A549 (cell line): ENCODE measurements at regions of chr3 and their contacts with region 1.

Region 1: DNA sequence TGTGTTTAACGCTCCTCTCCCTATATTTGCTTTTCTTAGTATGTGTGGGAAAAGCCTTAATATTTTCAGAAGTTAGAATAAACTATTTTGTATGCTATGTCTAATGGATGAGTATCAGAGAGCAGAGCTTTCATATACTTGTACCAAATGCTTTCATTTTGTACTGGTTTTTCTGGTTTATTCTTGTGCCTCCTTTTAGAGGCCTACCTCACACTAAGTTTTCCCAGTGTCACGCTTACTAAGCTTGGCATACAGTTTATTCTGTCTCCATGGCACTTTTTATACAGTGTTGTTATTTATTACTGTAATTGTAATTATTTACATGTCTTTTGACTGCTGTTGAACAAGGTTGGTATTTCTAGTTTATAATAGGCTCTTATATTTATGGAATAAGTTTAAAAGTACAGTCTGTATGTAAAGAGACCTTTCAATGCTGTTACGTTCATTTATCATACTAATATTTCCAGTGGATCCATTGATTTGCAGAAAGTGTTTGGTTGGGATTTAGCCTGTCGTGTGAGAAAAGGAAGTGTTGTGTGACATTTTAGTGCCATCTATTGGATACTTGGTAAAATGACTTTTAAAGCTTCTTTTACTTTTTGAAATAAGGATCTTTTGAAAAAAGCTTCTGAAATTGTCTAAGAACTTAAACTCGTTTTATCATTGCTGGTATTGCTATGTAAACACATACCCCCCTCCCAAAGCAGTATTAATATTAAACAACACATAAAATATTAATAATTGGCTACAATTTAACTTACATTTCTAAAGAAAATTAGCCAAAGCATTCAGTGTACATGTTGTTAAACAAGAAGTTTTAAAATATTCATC is 5.2 kb upstream of the EBLN2 start:
- DNase-seq: peak; percentile 12 to 64
- ATAC-seq: peak; percentile 56 to 79; a peak in 4 of 6 replicates
- H3K4me3 ChIP-seq: no peak overlapping the region
- H3K27ac ChIP-seq: peak overlapping the region in 1 of 2 experiments; percentile 51; a peak in 3 of 6 replicates
- H3K4me1 ChIP-seq: peaks cover 30% of the 10 kb centered on the region; the same call in 2 of the 3 replicates
- CTCF ChIP-seq: peak; percentile 70
- EP300 ChIP-seq: no peak
- POLR2A ChIP-seq: no peak
- RAD21 ChIP-seq: peak; percentile 66 to 74

Region 2: GRCh38 chr3:72887705-72888545 is 168.3 kb before region 1 on chr3 and contains the start of gene GXYLT2:
- CTCF ChIA-PET with region 1: interaction called, 10 read pairs
- POLR2A ChIA-PET with region 1: no interaction called
- DNase-seq: peak; percentile 58 to 75
- ATAC-seq: peak; percentile 94 to 95
- H3K4me3 ChIP-seq: peak within 1 kb of the TSS; percentile 71
- H3K27ac ChIP-seq: peak within 1 kb of the TSS; percentile 76 to 96
- H3K4me1 ChIP-seq: peaks cover 29% of the 10 kb centered on the region
- CTCF ChIP-seq: peak; percentile 51
- EP300 ChIP-seq: no peak
- POLR2A ChIP-seq: peak; percentile 46
- RAD21 ChIP-seq: no peak
- polyA plus RNA-seq, gene GXYLT2: 3.2 and 3.3 TPM in 2 replicates

Region 3: DNA sequence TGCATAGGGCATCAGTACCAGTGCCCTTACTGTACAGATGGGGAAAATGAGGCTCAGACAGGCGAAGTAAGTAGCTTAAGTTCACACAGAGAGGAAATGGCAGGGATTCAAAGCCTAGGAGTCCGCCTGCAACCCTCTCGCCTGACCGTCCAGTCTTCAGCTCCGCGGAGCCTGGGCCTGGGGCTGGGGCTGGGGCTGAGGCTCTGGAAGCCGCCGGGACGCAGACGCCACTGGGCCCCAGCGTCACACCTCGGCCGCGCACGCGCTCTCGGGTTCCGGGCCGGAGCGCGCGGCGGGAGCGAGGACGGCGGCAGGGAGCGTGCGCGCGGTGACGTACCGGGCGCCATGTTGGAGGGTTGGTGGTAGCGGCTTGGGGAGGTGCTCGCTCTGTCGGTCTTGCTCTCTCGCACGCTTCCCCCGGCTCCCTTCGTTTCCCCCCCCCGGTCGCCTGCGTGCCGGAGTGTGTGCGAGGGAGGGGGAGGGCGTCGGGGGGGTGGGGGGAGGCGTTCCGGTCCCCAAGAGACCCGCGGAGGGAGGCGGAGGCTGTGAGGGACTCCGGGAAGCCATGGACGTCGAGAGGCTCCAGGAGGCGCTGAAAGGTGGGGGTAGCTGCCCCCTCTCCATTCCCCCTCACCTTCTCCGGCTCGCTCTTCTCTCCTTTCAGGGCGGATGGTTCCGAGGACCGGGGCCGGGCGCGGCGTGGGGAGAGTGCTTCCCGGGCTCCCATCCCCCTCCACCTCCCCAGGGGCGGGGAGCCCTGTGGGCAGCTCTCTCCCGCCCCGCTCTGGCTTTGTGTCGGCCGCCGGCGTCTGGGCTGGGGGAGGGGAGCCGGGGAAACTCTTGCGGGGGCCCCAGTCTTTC is 59.5 kb before region 1 on chr3 and contains the start of gene PPP4R2:
- CTCF ChIA-PET with region 1: interaction called, 7 read pairs
- POLR2A ChIA-PET with region 1: interaction called, 14 read pairs
- DNase-seq: peak; percentile 72 to 93
- ATAC-seq: peak; percentile 94 to 96
- H3K4me3 ChIP-seq: peak within 1 kb of the TSS; percentile 76
- H3K27ac ChIP-seq: peak within 1 kb of the TSS; percentile 94 to 97
- H3K4me1 ChIP-seq: peaks cover 30% of the 10 kb centered on the region
- CTCF ChIP-seq: no peak
- EP300 ChIP-seq: no peak
- POLR2A ChIP-seq: peak; percentile 91
- RAD21 ChIP-seq: no peak
- polyA plus RNA-seq, gene PPP4R2: 42.9 and 68.4 TPM in 2 replicates

Region 4: GRCh38 chr3:73045391-73045790 is 10.8 kb before region 1 on chr3:
- CTCF ChIA-PET with region 1: interaction called, 16 read pairs
- POLR2A ChIA-PET with region 1: no interaction called
- DNase-seq: no peak
- ATAC-seq: no peak
- H3K4me3 ChIP-seq: no peak overlapping the region
- H3K27ac ChIP-seq: no peak overlapping the region
- H3K4me1 ChIP-seq: 0 out of 3 replicates have a peak, but pooled peaks cover 6% of the 10 kb centered on the region
- CTCF ChIP-seq: no peak
- EP300 ChIP-seq: no peak
- POLR2A ChIP-seq: no peak
- RAD21 ChIP-seq: no peak

Region 5: DNA sequence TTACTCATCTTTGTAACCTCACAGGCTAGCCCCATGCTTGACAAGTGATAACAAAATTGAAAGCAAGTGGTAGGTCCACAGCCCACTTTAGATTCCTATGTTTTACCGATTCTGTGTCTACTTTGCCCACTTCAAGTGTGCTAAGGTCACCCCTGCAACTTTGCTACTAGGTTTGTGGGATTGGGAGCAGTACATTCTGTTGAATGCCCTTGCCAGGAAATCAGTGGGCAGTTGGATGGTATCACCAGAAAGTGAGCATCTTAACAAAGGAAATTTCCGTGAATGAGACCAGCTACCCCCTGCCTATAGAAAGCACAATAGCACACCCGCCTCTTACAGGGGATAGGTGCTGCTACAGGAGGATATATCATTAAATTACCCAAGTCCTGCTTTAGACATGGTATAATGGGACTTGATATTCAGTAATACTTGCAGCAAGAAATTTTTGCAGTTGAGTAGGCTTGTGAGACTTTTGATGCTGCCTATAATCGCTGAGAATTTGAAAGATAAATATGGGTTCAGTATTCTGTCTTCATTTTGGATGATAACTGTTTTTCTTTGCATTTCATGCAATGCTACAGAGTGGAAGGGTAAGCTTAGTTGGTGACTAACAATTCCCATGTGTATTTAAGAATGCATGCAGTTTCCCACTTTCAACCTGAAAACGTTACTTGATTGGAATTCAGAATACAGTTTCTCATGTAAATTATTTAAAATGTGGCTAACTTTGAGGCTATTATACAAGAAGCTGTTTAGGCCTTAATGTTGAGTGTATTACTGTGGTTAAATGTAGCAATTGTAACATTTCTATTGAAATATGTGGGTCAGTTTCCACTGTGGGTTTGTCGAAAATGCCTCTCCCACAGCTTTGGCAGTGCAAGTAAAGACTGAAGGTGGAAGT is 14.7 kb after region 1 on chr3:
- CTCF ChIA-PET with region 1: no interaction called
- POLR2A ChIA-PET with region 1: no interaction called
- DNase-seq: no peak
- ATAC-seq: peak; percentile 49 to 55; a peak in 5 of 6 replicates
- H3K4me3 ChIP-seq: no peak overlapping the region
- H3K27ac ChIP-seq: no peak overlapping the region
- H3K4me1 ChIP-seq: no peaks in the 10 kb centered on the region
- CTCF ChIP-seq: no peak
- EP300 ChIP-seq: no peak
- POLR2A ChIP-seq: no peak
- RAD21 ChIP-seq: no peak

Region 6: DNA sequence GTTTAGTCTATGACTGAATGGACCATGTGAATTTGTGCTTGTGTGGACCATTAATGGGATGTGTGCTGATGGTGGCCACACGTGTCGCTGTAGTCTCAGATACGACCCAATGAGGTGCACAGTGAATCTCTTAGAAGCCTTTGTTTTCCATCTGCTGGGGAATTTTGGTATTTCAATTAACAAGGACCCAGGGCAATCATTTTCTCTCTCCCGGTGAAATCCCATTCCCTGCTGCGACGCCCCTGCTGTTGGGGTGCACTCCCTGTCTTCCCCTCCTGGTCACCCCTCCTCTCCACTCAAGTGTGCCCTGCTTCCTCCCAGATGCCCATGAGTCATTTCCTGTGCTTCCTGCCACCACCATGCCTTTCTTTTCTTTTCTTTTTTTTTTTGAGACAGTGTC is 37.9 kb after region 1 on chr3:
- CTCF ChIA-PET with region 1: no interaction called
- POLR2A ChIA-PET with region 1: no interaction called
- DNase-seq: peak; percentile 24 to 58
- ATAC-seq: peak; percentile 71 to 85
- H3K4me3 ChIP-seq: no peak overlapping the region
- H3K27ac ChIP-seq: no peak overlapping the region
- H3K4me1 ChIP-seq: no peaks in the 10 kb centered on the region
- CTCF ChIP-seq: no peak
- EP300 ChIP-seq: no peak
- POLR2A ChIP-seq: no peak
- RAD21 ChIP-seq: no peak